GM12878 (cell line): ENCODE measurements at regions of chr10 and their contacts with region 1.

Region 1: GRCh38 chr10:80699602-80700039 is 161.9 kb downstream of the SH2D4B start:
- DNase-seq: no peak
- ATAC-seq: peak; percentile 96
- H3K4me3 ChIP-seq: no peak overlapping the region
- H3K27ac ChIP-seq: no peak overlapping the region
- H3K4me1 ChIP-seq: no peaks in the 10 kb centered on the region; the same call in 1 of the 2 replicates
- H3K27me3 ChIP-seq: no peaks in the 10 kb centered on the region
- CTCF ChIP-seq: peak; percentile 88 to 92 (median 90)
- EP300 ChIP-seq: no peak
- POLR2A ChIP-seq: no peak
- RAD21 ChIP-seq: peak; percentile 88

Region 2: DNA sequence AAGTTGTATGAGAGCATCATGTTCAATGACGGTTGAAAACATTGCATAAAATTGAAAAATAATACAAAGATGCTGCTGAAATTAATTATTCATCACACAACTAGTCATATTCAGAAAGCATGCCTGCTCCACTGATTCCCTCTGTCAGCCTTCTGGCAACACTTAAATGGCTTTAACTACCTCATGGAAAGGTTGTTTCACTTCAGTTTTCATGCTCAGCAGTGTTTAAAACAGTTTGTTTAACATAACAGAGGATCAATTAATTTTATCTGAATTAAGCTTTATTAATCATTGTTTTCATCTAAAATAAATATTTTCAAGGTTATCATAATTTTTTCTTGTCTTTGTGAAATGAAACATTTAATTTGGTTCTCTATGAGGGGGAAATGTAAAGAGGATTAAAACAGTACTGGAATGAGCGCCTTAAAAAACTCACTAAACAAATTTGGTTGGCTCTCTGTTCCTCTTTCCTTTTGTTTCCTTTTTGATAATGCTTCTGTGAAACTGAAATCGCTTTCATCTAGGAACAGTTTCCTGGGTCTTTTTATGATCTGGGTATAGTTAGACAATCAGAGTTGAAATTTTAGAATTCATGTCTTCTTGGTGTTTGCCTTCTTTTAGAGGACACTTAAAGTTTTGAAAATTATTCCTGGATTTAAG is 265.5 kb after region 1 on chr10:
- CTCF ChIA-PET with region 1: no interaction called
- POLR2A ChIA-PET with region 1: no interaction called
- RAD21 ChIA-PET with region 1: no interaction called
- SMC1A ChIA-PET with region 1: no interaction called
- in situ Hi-C with region 1: no loop called
- intact Hi-C with region 1: no loop called
- DNase-seq: peak; percentile 25
- ATAC-seq: peak; percentile 86
- H3K4me3 ChIP-seq: no peak overlapping the region
- H3K27ac ChIP-seq: peak overlapping the region; percentile 3; the same call in 1 of the 2 replicates
- H3K4me1 ChIP-seq: peaks cover 7% of the 10 kb centered on the region; the same call in 1 of the 2 replicates
- H3K27me3 ChIP-seq: no peaks in the 10 kb centered on the region
- CTCF ChIP-seq: no peak
- EP300 ChIP-seq: peak in 1 of 2 experiments; percentile 61; a peak in 1 of 4 replicates
- POLR2A ChIP-seq: no peak
- RAD21 ChIP-seq: no peak

Region 3: GRCh38 chr10:81838953-81839352 is 1139.3 kb after region 1 on chr10:
- CTCF ChIA-PET with region 1: no interaction called
- POLR2A ChIA-PET with region 1: no interaction called
- RAD21 ChIA-PET with region 1: no interaction called
- SMC1A ChIA-PET with region 1: no interaction called
- in situ Hi-C with region 1: no loop called
- intact Hi-C with region 1: loop called (anchors 5 kb)
- DNase-seq: no peak
- ATAC-seq: peak; percentile 32; the same call in 1 of the 3 replicates
- H3K4me3 ChIP-seq: no peak overlapping the region
- H3K27ac ChIP-seq: no peak overlapping the region
- H3K4me1 ChIP-seq: no peaks in the 10 kb centered on the region
- H3K27me3 ChIP-seq: no peaks in the 10 kb centered on the region
- CTCF ChIP-seq: peak in 1 of 3 experiments; percentile 15; a peak in 1 of 6 replicates
- EP300 ChIP-seq: no peak
- POLR2A ChIP-seq: no peak
- RAD21 ChIP-seq: peak; percentile 39